Astrocyte of the cerebellum (primary cell): ENCODE measurements at regions of chr10 and their contacts with region 1.

Region 1: GRCh38 chr10:69792341-69792740 is 9.4 kb upstream of the COL13A1 start:
- DNase-seq: no peak
- H3K4me3 ChIP-seq: no peak overlapping the region
- CTCF ChIP-seq: no peak

Region 2: GRCh38 chr10:69657430-69657829 is 134.9 kb before region 1 on chr10:
- in situ Hi-C with region 1: loop called (anchors 5 kb)
- DNase-seq: no peak
- H3K4me3 ChIP-seq: no peak overlapping the region
- CTCF ChIP-seq: no peak

Region 3: GRCh38 chr10:69696073-69696731 is 96.1 kb before region 1 on chr10:
- in situ Hi-C with region 1: loop called (anchors 5 kb)
- DNase-seq: peak; percentile 78
- H3K4me3 ChIP-seq: no peak overlapping the region
- CTCF ChIP-seq: peak; percentile 65

Region 4: GRCh38 chr10:69721690-69722310 is 70.5 kb before region 1 on chr10:
- in situ Hi-C with region 1: no loop called
- DNase-seq: no peak
- H3K4me3 ChIP-seq: no peak overlapping the region
- CTCF ChIP-seq: no peak

Region 5: GRCh38 chr10:69749178-69750010 is 42.9 kb before region 1 on chr10:
- in situ Hi-C with region 1: loop called (anchors 5 kb)
- DNase-seq: no peak
- H3K4me3 ChIP-seq: no peak overlapping the region
- CTCF ChIP-seq: no peak

Region 6: GRCh38 chr10:69826789-69827554 is 34.6 kb after region 1 on chr10:
- in situ Hi-C with region 1: loop called (anchors 5 kb)
- DNase-seq: no peak
- H3K4me3 ChIP-seq: no peak overlapping the region
- CTCF ChIP-seq: peak; percentile 21

Region 7: DNA sequence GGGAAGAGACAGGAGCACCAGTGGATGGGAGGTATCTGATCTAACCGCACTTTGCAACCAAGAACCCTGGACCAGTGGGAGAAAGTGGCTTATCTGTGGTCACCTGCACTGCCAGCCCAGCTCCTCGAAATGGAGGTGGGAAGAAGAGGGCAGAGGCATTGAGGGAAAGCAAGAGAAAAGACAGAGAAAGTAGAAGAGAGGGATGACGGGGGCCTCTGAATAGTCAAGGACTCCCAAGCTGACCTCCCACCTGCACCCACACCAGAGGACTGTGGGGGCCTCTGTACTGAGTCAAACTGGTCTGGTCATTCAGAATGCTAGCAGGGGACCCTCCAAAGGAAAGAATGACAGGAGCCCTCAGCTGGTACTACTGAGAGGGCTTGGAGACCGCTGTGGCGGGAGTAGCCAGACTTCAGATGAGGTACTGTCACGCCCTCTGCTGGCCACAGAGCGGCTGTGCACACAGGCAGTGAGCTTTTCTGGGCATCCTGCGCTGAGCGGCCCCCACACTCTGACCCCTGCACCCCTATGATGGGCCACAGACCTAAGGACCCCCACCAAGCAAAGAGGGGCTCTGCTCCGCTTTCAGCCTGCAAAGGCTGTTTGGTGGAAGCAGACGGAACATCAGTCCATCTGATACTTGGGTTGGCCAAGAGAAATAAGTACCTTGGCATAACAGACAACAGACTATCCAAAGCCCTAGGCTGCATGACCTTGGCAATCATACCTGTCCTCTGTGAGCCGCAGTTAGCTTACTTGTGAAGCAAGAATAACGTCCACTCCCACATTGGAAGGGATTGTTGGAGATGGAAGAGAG is 122.3 kb after region 1 on chr10:
- in situ Hi-C with region 1: loop called (anchors 5 kb)
- DNase-seq: peak; percentile 51
- H3K4me3 ChIP-seq: no peak overlapping the region
- CTCF ChIP-seq: peak; percentile 91